Natural killer cell (primary cell): ENCODE measurements at regions of chr12 and their contacts with region 1.

Region 1: GRCh38 chr12:50111693-50112455 is at the start of gene COX14:
- DNase-seq: peak; percentile 99 to 100
- ATAC-seq: peak; percentile 83 to 93 (median 85)
- H3K4me3 ChIP-seq: peak within 1 kb of the TSS; percentile 97
- H3K4me3 Mint-ChIP-seq: peak within 1 kb of the TSS; percentile 99
- H3K27ac ChIP-seq: peak within 1 kb of the TSS; percentile 93
- H3K27ac Mint-ChIP-seq: peak within 1 kb of the TSS; percentile 89 to 96
- H3K4me1 ChIP-seq: peaks cover 33% of the 10 kb centered on the region
- H3K4me1 Mint-ChIP-seq: peaks cover 28 to 37% of the 10 kb centered on the region in 2 donors
- H3K27me3 ChIP-seq: no peaks in the 10 kb centered on the region
- H3K27me3 Mint-ChIP-seq: no peaks in the 10 kb centered on the region
- CTCF ChIP-seq: peak; percentile 89
- total RNA-seq, gene COX14: 32.8 to 42.6 (median 36.7) TPM

Region 2: GRCh38 chr12:50025187-50026059 is 86.5 kb before region 1 on chr12 and contains the start of gene RACGAP1:
- intact Hi-C with region 1: loop called (anchors 1 kb)
- DNase-seq: peak; percentile 91 to 100
- ATAC-seq: peak; percentile 96
- H3K4me3 ChIP-seq: peak within 1 kb of the TSS; percentile 57
- H3K4me3 Mint-ChIP-seq: peak within 1 kb of the TSS; percentile 97
- H3K27ac ChIP-seq: peak within 1 kb of the TSS; percentile 34
- H3K27ac Mint-ChIP-seq: peak within 1 kb of the TSS; percentile 86 to 91
- H3K4me1 ChIP-seq: peaks cover 7% of the 10 kb centered on the region
- H3K4me1 Mint-ChIP-seq: peaks cover 11 to 19% of the 10 kb centered on the region in 2 donors
- H3K27me3 ChIP-seq: no peaks in the 10 kb centered on the region
- H3K27me3 Mint-ChIP-seq: no peaks in the 10 kb centered on the region
- CTCF ChIP-seq: no peak
- total RNA-seq, gene RACGAP1: 6.1 to 11.6 (median 8.7) TPM

Region 3: GRCh38 chr12:50167041-50167828 is 55.4 kb after region 1 on chr12 and contains the start of gene CERS5:
- intact Hi-C with region 1: loop called (anchors 1 kb)
- DNase-seq: peak; percentile 93 to 97
- ATAC-seq: peak; percentile 96 to 100 (median 96)
- H3K4me3 ChIP-seq: peak within 1 kb of the TSS; percentile 97
- H3K4me3 Mint-ChIP-seq: peak within 1 kb of the TSS; percentile 93
- H3K27ac ChIP-seq: peak within 1 kb of the TSS; percentile 93
- H3K27ac Mint-ChIP-seq: peak within 1 kb of the TSS; percentile 82 to 91
- H3K4me1 ChIP-seq: peaks cover 17% of the 10 kb centered on the region
- H3K4me1 Mint-ChIP-seq: peaks cover 9 to 33% of the 10 kb centered on the region in 2 donors
- H3K27me3 ChIP-seq: no peaks in the 10 kb centered on the region
- H3K27me3 Mint-ChIP-seq: no peaks in the 10 kb centered on the region
- CTCF ChIP-seq: no peak
- total RNA-seq, gene CERS5: 69.9 to 81.2 (median 75.8) TPM